K562 (cell line): ENCODE measurements at regions of chr1 and their contacts with region 1.

Region 1: DNA sequence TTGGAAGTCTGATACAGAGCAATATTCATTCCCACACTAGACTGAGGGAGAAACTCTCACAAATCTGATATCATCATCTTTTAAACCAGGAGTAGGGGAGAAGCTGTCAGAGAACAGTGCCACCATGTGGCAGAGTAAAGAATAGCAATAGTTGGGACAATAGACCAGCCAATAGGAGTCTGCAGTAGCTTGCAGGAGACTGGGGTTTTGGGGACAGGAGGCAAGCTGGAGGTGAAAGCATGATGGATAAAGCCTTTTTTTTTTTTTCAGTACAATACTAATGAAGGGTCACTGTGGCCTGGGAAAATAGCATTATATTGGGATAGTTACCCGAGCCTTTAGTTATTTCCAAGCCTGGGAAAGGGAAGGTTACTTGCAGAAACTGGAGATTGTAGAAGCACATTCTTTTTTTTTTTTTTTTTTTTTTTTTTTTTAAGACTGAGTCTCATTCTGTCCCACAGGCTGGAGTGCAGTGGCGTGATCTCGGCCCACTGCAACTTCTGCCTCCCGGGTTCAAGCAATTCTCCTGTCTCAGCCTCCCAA is 120.7 kb downstream of the S1PR1 start:
- DNase-seq: peak; percentile 76 to 87 (median 81)
- ATAC-seq: peak; percentile 100
- H3K4me3 ChIP-seq: no peak overlapping the region
- H3K27ac ChIP-seq: no peak overlapping the region
- H3K4me1 ChIP-seq: no peaks in the 10 kb centered on the region
- H3K27me3 ChIP-seq: peaks cover 0 to 2% of the 10 kb centered on the region in 2 experiments; a peak in 2 of 5 replicates
- CTCF ChIP-seq: peak; percentile 71 to 84 (median 83)
- EP300 ChIP-seq: no peak
- POLR2A ChIP-seq: no peak
- RAD21 ChIP-seq: peak; percentile 58 to 83

Region 2: DNA sequence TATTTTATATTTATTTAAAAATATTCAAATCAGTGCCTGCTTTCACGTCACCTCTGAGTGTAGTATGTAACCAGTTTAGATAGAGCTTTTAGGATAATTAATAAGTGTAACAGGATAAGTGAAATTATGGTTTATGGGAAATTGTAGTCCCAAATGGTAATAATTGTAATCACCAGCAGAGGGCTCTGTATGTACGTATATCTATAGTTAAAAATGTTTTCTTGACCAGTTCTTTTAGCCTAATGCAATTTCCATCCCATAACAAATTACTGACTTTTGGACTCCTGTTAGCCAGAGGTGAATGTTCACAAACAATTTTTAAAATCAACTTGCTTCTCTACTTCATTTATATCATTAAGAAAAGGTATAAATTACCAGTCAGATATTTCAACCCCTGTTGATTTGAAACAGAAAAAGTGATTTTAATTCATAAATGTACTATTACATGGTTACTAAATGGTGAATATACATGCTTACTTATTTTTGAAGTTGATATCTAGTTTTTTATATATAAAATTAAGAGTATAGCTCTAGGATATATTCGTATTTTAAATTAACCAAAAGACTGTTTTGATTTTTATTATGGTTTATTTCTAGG is 436.3 kb before region 1 on chr1:
- CTCF ChIA-PET with region 1: interaction called, 4 read pairs
- POLR2A ChIA-PET with region 1: no interaction called
- in situ Hi-C with region 1: no loop called
- intact Hi-C with region 1: loop called (anchors 5 kb)
- DNase-seq: peak; percentile 16 to 60 (median 22)
- ATAC-seq: peak; percentile 44; the same call in 1 of the 3 replicates
- H3K4me3 ChIP-seq: no peak overlapping the region
- H3K27ac ChIP-seq: no peak overlapping the region
- H3K4me1 ChIP-seq: no peaks in the 10 kb centered on the region
- H3K27me3 ChIP-seq: no peaks in the 10 kb centered on the region
- CTCF ChIP-seq: peak in 2 of 3 experiments; percentile 31 to 79; a peak in 3 of 6 replicates
- EP300 ChIP-seq: no peak
- POLR2A ChIP-seq: no peak
- RAD21 ChIP-seq: peak; percentile 79 to 84

Region 3: GRCh38 chr1:101309334-101310311 is 47.9 kb before region 1 on chr1:
- CTCF ChIA-PET with region 1: interaction called, 12 read pairs
- POLR2A ChIA-PET with region 1: interaction called, 3 read pairs
- in situ Hi-C with region 1: no loop called
- intact Hi-C with region 1: loop called (anchors 1 kb)
- DNase-seq: peak; percentile 55 to 63 (median 60)
- ATAC-seq: peak; percentile 85
- H3K4me3 ChIP-seq: no peak overlapping the region
- H3K27ac ChIP-seq: no peak overlapping the region
- H3K4me1 ChIP-seq: 0 out of 5 replicates have a peak, but pooled peaks cover 0 to 2% of the 10 kb centered on the region in 2 experiments
- H3K27me3 ChIP-seq: peaks cover 0 to 26% of the 10 kb centered on the region in 2 experiments; a peak in 4 of 5 replicates
- CTCF ChIP-seq: peak; percentile 81 to 87 (median 81)
- EP300 ChIP-seq: no peak
- POLR2A ChIP-seq: no peak
- RAD21 ChIP-seq: peak; percentile 50 to 79

Region 4: DNA sequence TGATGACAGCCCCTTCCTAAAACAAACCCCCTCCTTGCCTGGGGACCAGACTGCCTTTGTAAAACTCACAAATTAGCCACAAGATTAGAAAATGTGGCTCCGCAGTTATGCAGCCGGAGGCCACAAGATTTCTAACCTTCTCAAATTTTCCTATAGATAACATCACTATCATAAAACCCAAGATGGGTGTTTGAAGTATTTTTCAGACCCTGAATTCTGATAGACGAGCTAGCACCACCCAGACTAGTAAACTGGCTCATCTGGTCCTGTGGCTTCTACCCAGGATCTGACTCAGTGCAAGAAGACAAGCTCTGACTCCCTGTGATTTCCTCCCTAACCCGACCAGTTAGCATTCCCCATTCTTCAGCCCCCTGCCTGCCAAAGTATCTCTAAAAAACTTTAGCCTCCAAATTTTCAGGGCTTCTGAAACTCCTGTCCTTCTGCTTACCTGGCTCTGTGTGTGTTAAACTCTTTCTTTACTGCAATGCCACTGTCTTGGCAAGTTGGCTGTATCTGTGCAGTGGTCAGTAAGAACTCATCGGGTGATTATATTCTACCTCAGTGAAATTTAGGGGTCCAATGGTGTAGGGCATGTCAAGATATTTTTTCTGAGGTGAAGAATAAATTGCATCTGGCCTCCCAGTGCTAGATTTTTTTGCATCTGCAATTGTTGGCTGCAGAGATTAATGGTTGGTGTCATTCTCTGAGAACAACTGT is 18.6 kb before region 1 on chr1:
- CTCF ChIA-PET with region 1: no interaction called
- POLR2A ChIA-PET with region 1: no interaction called
- in situ Hi-C with region 1: no loop called
- intact Hi-C with region 1: no loop called
- DNase-seq: no peak
- ATAC-seq: no peak
- H3K4me3 ChIP-seq: no peak overlapping the region
- H3K27ac ChIP-seq: no peak overlapping the region
- H3K4me1 ChIP-seq: no peaks in the 10 kb centered on the region; a peak in 1 of 5 replicates
- H3K27me3 ChIP-seq: no peaks in the 10 kb centered on the region
- CTCF ChIP-seq: no peak
- EP300 ChIP-seq: no peak
- POLR2A ChIP-seq: no peak
- RAD21 ChIP-seq: no peak